ENCODE measurements at regions of chr1 and their contacts with region 1.

Region 1: GRCh38 chr1:64136752-64137411 is 66.5 kb upstream of the UBE2U start:
- DNase-seq: peak; percentile 78
- H3K4me3 Mint-ChIP-seq: no peak overlapping the region
- H3K27ac Mint-ChIP-seq: no peak overlapping the region
- H3K4me1 Mint-ChIP-seq: no peaks in the 10 kb centered on the region
- H3K27me3 Mint-ChIP-seq: peaks cover 3% of the 10 kb centered on the region

Region 2: GRCh38 chr1:63621698-63622097 is 515.2 kb before region 1 on chr1:
- CTCF ChIA-PET with region 1: interaction called, 34 read pairs
- POLR2A ChIA-PET with region 1: no interaction called
- intact Hi-C with region 1: no loop called
- DNase-seq: no peak
- H3K4me3 Mint-ChIP-seq: no peak overlapping the region
- H3K27ac Mint-ChIP-seq: no peak overlapping the region
- H3K4me1 Mint-ChIP-seq: no peaks in the 10 kb centered on the region
- H3K27me3 Mint-ChIP-seq: no peaks in the 10 kb centered on the region

Region 3: GRCh38 chr1:63773815-63774616 is 362.9 kb before region 1 on chr1 and contains the start of gene ROR1:
- CTCF ChIA-PET with region 1: interaction called, 7 read pairs
- POLR2A ChIA-PET with region 1: no interaction called
- intact Hi-C with region 1: loop called (anchors 1 kb)
- DNase-seq: peak; percentile 79
- H3K4me3 Mint-ChIP-seq: peak within 1 kb of the TSS; percentile 66
- H3K27ac Mint-ChIP-seq: no peak within 1 kb of the TSS
- H3K4me1 Mint-ChIP-seq: peaks cover 14% of the 10 kb centered on the region
- H3K27me3 Mint-ChIP-seq: peaks cover 50% of the 10 kb centered on the region
- total RNA-seq, gene ROR1: 0.10 to 0.12 TPM

Region 4: GRCh38 chr1:64006276-64007051 is 130.4 kb before region 1 on chr1:
- CTCF ChIA-PET with region 1: no interaction called
- POLR2A ChIA-PET with region 1: no interaction called
- intact Hi-C with region 1: no loop called
- DNase-seq: peak; percentile 9
- H3K4me3 Mint-ChIP-seq: no peak overlapping the region
- H3K27ac Mint-ChIP-seq: no peak overlapping the region
- H3K4me1 Mint-ChIP-seq: peaks cover 3% of the 10 kb centered on the region
- H3K27me3 Mint-ChIP-seq: peaks cover 4% of the 10 kb centered on the region

Region 5: DNA sequence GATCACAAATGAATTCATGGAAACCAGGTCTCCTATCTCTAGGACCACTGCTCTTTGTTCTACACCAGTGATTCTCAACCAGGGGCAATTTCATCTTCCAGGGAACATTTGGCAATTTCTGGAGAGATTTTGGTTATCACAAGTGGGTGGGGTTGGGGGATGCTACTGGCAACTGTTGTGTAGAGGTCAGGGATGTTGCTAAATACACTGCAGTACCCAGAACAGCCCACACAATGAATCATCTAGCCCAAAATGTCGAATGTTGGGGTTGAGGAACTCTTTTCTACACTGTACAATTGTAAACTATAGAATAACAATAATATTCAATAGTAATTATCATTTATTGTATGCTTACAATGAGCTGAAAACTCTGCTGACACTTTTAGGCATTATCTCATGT is 10.9 kb after region 1 on chr1:
- CTCF ChIA-PET with region 1: interaction called, 11 read pairs
- POLR2A ChIA-PET with region 1: no interaction called
- intact Hi-C with region 1: no loop called
- DNase-seq: no peak
- H3K4me3 Mint-ChIP-seq: no peak overlapping the region
- H3K27ac Mint-ChIP-seq: no peak overlapping the region
- H3K4me1 Mint-ChIP-seq: no peaks in the 10 kb centered on the region
- H3K27me3 Mint-ChIP-seq: peaks cover 8% of the 10 kb centered on the region

Measured in activated CD4-positive, alpha-beta memory T cell treated with anti-CD3 and anti-CD28 coated beads for 36 hours (primary cell).